Left cardiac atrium (tissue), 4 donors: ENCODE measurements at regions of chr10 and their contacts with region 1.

Region 1: DNA sequence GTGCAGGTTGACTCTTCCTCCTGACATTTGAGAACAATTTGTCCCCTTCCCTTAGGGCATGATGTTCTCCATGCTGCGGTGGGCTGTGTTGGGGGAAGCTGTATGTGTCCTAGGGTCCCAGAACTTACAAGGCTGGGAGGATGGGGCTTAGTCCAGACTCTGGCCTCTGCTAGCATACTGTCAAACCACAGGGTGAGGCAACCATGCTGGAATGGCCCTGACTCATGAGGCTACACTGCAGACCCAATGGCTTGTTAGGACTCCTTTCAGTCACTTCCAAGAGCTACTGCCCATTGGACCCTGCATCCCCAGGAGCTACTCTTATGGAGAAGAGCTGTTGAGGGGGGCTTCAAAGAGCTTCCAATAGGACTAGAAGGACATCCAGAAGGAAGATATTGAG is 20.1 kb upstream of the FAM170B start:
- DNase-seq: no peak
- ATAC-seq: no peak

Region 2: DNA sequence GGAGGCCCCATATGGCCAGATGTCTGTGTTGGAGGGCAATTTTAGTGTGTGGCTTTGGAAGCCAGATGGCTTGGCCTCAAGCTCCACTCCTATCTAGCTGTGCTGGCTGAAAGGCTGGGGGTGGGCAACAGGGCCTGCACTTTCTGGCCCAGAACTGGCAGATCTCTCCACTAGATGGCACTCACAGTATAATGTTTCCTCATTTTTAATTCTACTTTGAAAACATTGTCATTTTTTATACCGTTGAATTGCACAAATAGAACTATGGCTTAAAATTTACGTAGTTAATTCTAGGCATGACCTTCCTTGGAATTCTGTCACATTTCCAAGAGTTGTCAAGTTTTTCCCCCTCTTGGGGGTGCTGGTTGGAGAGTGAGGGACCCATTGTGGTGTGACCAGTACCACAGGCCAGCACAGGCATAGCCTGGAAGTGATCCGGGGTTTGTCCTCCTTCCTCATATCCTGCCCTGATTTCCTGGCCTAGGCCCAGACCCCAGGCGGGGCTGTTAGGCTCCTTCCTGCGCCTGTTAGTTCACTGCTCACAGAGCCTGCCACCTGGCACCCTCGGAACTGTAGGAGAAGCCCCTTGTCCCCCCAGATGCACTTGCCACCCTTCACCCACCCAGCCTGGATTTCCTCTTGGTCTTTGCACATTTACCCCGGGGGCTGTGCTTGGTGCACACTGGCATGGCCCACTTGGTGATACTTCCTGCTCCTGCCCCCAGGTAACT is 601.9 kb before region 1 on chr10:
- intact Hi-C with region 1: loop called in 1 of 2 experiments (anchors 10 kb)
- DNase-seq: peak; percentile 48
- ATAC-seq: peak; percentile 60 to 62

Region 3: DNA sequence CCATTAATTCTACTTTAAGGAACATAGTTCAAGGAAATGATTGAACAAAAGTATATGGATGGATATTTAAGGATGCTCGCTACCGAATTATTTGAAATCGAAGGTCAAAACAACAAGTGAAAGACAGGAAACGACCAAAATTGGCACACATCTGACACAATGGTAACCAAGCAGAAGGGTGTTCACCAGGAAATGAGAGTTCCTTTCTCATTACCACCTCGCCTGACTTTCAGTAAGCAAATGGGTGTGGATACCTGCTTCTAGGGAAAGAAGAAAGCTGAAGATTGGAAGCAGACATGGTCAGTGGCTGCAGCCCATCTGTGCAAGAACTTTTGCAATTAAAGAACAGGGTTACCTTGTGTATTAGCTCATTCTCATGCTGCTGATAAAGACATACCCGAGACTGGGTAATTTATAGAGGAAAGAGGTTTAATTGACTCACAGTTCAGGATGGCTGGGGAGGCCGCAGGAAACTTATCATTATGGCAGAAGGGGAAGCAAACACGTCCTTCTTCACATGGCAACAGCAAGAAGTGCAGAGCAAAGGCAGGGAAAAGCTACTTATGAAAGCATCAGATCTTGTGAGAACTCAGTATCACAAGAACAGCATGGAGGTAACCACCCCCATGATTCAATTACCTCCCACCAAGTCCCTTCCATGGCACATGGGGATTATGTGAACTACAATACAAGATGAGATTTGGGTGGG is 40.4 kb after region 1 on chr10:
- intact Hi-C with region 1: no loop called
- DNase-seq: no peak
- ATAC-seq: no peak

Region 4: GRCh38 chr10:49435224-49435623 is 281.3 kb after region 1 on chr10:
- intact Hi-C with region 1: no loop called
- DNase-seq: no peak
- ATAC-seq: no peak

Region 5: GRCh38 chr10:49562893-49563292 is 408.9 kb after region 1 on chr10:
- intact Hi-C with region 1: no loop called
- DNase-seq: no peak
- ATAC-seq: no peak